K562 (cell line): ENCODE measurements at regions of chr12 and their contacts with region 1.

Region 1: DNA sequence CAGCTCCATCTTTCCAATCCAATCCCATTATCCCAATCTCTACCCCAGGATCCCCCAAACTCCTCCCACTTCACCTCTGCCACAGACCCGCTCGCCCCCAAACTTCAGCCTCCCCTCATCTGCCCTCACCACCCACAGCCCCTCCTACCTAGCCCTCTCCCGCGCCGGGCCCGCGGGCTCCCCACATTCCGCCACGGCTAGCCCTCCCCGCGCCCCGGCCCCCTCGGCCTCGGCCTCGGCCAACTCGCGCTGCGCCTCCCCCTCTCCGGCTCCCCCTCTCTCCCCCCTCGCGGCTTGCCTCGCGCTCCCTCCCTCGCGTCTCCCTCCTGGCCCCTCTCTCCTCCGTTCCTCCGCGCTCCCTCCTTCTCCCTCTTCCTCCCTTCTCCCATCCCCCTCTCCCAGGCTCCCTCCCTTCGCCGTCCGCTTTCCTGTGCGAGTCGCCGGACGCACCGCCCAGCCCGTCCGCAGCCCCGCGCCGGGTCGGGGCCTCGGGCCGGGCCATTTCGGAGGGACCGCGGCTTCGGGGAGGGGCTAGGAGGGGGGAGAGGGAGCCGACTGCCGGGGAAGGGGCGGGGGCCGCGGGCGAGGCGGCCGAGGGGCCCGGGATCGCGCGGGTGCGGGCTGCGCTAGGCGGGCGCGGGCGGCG is at the start of gene ATN1:
- DNase-seq: peak; percentile 70 to 78 (median 74)
- ATAC-seq: peak; percentile 47
- H3K4me3 ChIP-seq: peak within 1 kb of the TSS; percentile 76
- H3K27ac ChIP-seq: peak within 1 kb of the TSS; percentile 85
- H3K4me1 ChIP-seq: peaks cover 41 to 42% of the 10 kb centered on the region in 2 experiments; a peak in 4 of 5 replicates
- H3K27me3 ChIP-seq: no peaks in the 10 kb centered on the region
- CTCF ChIP-seq: no peak
- EP300 ChIP-seq: no peak
- POLR2A ChIP-seq: peak; percentile 69
- RAD21 ChIP-seq: no peak
- polyA plus RNA-seq, gene ATN1: 0.15 to 0.20 TPM

Region 2: DNA sequence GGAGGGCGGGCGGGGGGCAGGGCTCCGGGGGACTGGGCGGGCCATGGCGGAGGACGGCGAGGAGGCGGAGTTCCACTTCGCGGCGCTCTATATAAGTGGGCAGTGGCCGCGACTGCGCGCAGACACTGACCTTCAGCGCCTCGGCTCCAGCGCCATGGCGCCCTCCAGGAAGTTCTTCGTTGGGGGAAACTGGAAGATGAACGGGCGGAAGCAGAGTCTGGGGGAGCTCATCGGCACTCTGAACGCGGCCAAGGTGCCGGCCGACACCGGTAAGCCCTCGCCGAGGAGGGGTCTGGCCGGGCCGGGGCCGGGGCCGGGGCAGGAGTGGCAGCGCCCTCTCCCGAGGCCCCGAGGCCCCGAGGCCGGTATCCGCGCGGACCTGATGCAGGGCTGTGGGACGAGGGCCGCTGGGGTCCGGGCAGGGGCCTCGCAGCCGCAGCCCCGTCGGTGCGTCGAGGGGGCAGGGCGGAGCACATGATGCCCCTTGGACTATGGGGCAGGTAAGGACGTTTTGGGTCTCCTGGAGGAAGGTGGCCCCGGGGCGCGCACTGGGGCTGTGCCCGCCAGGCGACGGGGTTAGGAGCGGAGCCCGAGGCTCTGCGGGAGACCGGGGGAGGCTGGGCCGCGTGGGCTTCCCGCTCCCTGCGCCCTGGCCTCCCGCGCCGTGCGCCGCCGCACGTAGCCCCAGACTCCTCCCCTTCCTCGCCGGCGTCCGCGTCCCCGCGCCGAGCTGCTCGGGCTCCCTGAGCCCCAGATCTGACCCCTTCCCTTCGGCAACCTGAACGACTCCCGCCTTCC is 59.9 kb before region 1 on chr12 and contains the start of gene TPI1:
- CTCF ChIA-PET with region 1: interaction called, 3 read pairs
- POLR2A ChIA-PET with region 1: interaction called, 13 read pairs
- in situ Hi-C with region 1: no loop called
- intact Hi-C with region 1: no loop called
- DNase-seq: peak; percentile 78 to 91 (median 81)
- ATAC-seq: peak; percentile 83
- H3K4me3 ChIP-seq: peak within 1 kb of the TSS; percentile 96
- H3K27ac ChIP-seq: peak within 1 kb of the TSS; percentile 94
- H3K4me1 ChIP-seq: peaks cover 33 to 53% of the 10 kb centered on the region in 2 experiments; a peak in 4 of 5 replicates
- H3K27me3 ChIP-seq: no peaks in the 10 kb centered on the region
- CTCF ChIP-seq: 0 out of 6 replicates have a peak, but pooled peaks of 1 of the 3 experiments have one; percentile 3
- EP300 ChIP-seq: no peak
- POLR2A ChIP-seq: peak; percentile 99
- RAD21 ChIP-seq: no peak
- polyA plus RNA-seq, gene TPI1: 4,965 to 4,971 TPM

Region 3: GRCh38 chr12:6912164-6912935 is 15.2 kb before region 1 on chr12:
- CTCF ChIA-PET with region 1: no interaction called
- POLR2A ChIA-PET with region 1: interaction called, 14 read pairs
- in situ Hi-C with region 1: no loop called
- intact Hi-C with region 1: no loop called
- DNase-seq: no peak
- ATAC-seq: no peak
- H3K4me3 ChIP-seq: no peak overlapping the region
- H3K27ac ChIP-seq: no peak overlapping the region
- H3K4me1 ChIP-seq: peaks cover 12 to 40% of the 10 kb centered on the region in 2 experiments; a peak in 4 of 5 replicates
- H3K27me3 ChIP-seq: no peaks in the 10 kb centered on the region
- CTCF ChIP-seq: no peak
- EP300 ChIP-seq: no peak
- POLR2A ChIP-seq: no peak
- RAD21 ChIP-seq: no peak

Region 4: DNA sequence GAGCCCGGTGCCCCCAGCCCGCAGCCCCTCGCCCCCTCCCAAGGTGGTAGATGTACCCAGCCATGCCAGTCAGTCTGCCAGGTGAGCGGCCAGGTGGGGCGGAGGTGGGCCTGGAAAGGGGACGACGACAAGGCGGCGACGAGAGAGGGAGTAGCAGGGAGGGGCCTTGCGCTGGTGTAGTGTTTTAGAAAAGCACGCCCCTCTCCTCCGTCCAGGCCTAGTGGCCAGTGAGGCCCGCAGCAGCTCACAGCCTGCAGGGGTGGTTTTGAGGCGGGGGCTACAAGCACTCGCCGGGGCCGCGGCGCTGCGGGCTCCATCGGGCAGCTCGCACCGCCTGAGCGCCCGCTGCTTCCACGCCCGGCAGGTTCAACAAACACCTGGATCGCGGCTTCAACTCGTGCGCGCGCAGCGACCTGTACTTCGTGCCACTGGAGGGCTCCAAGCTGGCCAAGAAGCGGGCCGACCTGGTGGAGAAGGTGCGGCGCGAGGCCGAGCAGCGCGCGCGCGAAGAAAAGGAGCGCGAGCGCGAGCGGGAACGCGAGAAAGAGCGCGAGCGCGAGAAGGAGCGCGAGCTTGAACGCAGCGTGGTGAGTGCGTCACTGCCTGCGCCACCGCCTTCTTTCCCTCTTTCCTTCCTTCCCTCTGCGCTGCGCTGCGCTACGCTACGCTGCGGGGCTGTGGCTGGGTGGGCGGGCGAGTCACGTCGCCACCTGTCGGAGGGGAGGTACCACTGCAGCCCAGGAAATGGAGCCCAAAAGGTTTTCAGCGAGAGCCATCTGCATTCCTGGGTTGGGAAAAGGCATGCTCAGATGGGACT is 10.2 kb after region 1 on chr12:
- CTCF ChIA-PET with region 1: no interaction called
- POLR2A ChIA-PET with region 1: interaction called, 61 read pairs
- in situ Hi-C with region 1: no loop called
- intact Hi-C with region 1: no loop called
- DNase-seq: peak; percentile 61 to 95 (median 72)
- ATAC-seq: peak; percentile 95
- H3K4me3 ChIP-seq: peak overlapping the region; percentile 44
- H3K27ac ChIP-seq: peak overlapping the region; percentile 92
- H3K4me1 ChIP-seq: peaks cover 10 to 55% of the 10 kb centered on the region in 2 experiments; a peak in 4 of 5 replicates
- H3K27me3 ChIP-seq: no peaks in the 10 kb centered on the region
- CTCF ChIP-seq: peak; percentile 82 to 91 (median 86)
- EP300 ChIP-seq: no peak
- POLR2A ChIP-seq: peak; percentile 81
- RAD21 ChIP-seq: peak; percentile 27 to 55

Region 5: DNA sequence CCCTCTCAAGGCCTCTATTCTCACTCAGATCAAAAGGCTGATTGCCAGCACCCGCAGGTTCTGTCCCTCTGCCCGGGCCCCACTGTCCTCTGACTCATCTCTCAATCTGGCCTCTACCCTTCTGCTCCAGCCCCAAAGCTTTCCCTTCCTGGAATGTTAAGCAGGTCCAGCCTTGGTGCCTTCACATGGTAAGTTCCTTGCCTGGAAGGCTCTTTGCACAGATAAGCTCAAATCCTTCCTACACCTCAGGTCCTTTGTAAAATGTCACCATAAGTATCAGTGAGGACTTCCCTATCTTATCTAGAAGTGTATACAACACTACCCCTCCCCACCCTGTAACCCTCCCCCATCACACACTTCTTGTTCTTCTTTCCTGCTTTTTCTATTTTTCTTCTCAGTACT is 68.5 kb after region 1 on chr12:
- CTCF ChIA-PET with region 1: no interaction called
- POLR2A ChIA-PET with region 1: no interaction called
- in situ Hi-C with region 1: no loop called
- intact Hi-C with region 1: no loop called
- DNase-seq: peak; percentile 28 to 61 (median 47)
- ATAC-seq: peak; percentile 63
- H3K4me3 ChIP-seq: no peak overlapping the region
- H3K27ac ChIP-seq: no peak overlapping the region
- H3K4me1 ChIP-seq: peaks cover 0 to 13% of the 10 kb centered on the region in 2 experiments; a peak in 3 of 5 replicates
- H3K27me3 ChIP-seq: no peaks in the 10 kb centered on the region
- CTCF ChIP-seq: no peak
- EP300 ChIP-seq: no peak
- POLR2A ChIP-seq: no peak
- RAD21 ChIP-seq: no peak

Region 6: GRCh38 chr12:7042842-7043241 is 115.3 kb after region 1 on chr12:
- CTCF ChIA-PET with region 1: interaction called, 4 read pairs
- POLR2A ChIA-PET with region 1: no interaction called
- in situ Hi-C with region 1: no loop called
- intact Hi-C with region 1: loop called (anchors 5 kb)
- DNase-seq: peak; percentile 22 to 64 (median 40)
- ATAC-seq: peak; percentile 87
- H3K4me3 ChIP-seq: no peak overlapping the region
- H3K27ac ChIP-seq: no peak overlapping the region
- H3K4me1 ChIP-seq: no peaks in the 10 kb centered on the region; a peak in 1 of 5 replicates
- H3K27me3 ChIP-seq: no peaks in the 10 kb centered on the region
- CTCF ChIP-seq: peak; percentile 54 to 75 (median 59); a peak in 5 of 6 replicates
- EP300 ChIP-seq: no peak
- POLR2A ChIP-seq: no peak
- RAD21 ChIP-seq: peak; percentile 72 to 77

Region 7: DNA sequence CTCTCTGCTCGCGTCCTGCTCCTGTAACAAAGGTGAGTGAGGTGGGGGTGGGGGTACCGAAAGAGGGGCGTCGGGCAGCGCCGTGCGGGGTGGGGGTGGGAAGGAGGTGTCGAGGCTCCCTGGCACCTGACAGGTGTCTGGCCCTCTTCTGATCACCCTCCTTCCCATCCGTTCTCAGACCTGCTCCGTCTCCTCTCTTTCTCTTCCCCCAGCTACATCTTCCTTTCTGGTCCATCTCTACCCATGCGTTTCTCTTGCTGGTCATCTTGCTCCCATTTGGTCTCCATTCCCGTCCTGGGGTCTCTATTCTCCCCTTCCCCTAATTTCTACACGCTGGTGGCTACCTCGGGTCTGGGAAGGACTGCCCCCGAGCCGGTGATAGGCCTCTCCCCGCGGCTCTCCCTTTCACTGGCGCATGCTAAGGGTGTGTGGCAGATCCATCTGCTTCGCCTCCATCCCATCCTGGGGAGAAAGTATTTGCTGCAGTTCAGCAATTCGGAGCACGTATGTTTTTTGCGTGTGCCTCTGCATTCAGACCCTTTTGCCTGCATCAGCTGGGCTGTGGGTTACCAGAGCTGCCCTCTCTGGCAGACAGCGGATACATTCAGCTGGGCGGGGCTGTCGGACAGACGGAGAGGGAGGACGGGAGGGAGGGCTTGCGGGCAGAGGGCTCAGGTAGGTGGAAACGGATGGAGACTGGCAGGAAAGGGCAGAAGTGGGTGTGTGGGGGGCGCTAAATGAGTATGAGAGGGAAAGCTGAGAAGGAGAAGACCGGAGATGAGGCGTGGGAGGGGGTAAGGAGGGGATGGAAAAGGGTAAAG is 203.4 kb after region 1 on chr12:
- CTCF ChIA-PET with region 1: no interaction called
- POLR2A ChIA-PET with region 1: no interaction called
- in situ Hi-C with region 1: no loop called
- intact Hi-C with region 1: no loop called
- DNase-seq: peak; percentile 32 to 56 (median 36)
- ATAC-seq: peak; percentile 30; the same call in 2 of the 3 replicates
- H3K4me3 ChIP-seq: peak overlapping the region; percentile 61
- H3K27ac ChIP-seq: peak overlapping the region; percentile 81; the same call in 1 of the 3 replicates
- H3K4me1 ChIP-seq: peaks cover 24 to 45% of the 10 kb centered on the region in 2 experiments
- H3K27me3 ChIP-seq: no peaks in the 10 kb centered on the region
- CTCF ChIP-seq: no peak
- EP300 ChIP-seq: no peak
- POLR2A ChIP-seq: no peak
- RAD21 ChIP-seq: no peak